Calu3 (cell line): ENCODE measurements at regions of chr7 and their contacts with region 1.

Region 1: GRCh38 chr7:131219312-131220041 is 108.2 kb upstream of the MKLN1 start:
- DNase-seq: no peak
- H3K4me3 Mint-ChIP-seq: no peak overlapping the region
- H3K27ac Mint-ChIP-seq: no peak overlapping the region
- H3K4me1 Mint-ChIP-seq: peaks cover 8% of the 10 kb centered on the region
- H3K27me3 Mint-ChIP-seq: no peaks in the 10 kb centered on the region
- CTCF ChIP-seq: no peak

Region 2: GRCh38 chr7:130758429-130759056 is 460.9 kb before region 1 on chr7:
- CTCF ChIA-PET with region 1: interaction called, 11 read pairs
- intact Hi-C with region 1: no loop called
- DNase-seq: no peak
- H3K4me3 Mint-ChIP-seq: no peak overlapping the region
- H3K27ac Mint-ChIP-seq: no peak overlapping the region
- H3K4me1 Mint-ChIP-seq: no peaks in the 10 kb centered on the region
- H3K27me3 Mint-ChIP-seq: peaks cover 60% of the 10 kb centered on the region
- CTCF ChIP-seq: peak; percentile 17

Region 3: DNA sequence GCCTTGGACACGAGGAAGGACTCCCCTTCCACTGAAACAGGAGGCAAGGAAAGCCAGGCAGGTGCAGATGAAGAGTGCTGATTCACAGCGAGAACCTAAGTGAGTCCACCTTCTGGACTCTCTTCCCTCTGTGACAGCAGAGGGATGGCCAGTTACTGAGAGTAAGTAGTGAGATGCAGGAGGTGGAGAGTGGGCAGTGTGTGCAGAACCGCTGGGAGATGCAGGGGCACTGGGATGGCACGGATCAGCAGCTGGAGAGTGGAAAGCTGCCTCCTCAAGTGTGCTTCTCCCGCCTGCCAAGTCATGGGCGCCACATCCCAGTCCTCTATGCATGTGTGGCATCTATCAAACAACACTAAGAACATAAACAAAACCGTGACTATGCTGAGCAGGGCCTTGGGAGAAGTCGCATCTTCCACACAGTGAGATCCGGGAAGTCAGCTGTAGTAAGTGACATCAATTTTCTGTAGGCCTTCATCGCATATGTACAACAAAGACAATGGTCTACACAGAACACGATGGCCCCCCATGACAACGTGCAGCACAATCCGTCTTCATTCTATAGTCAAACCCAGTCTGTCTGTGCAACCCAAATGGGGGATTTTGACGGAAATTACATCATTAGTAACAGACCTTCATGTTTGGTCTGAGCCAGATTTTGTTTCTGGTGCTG is 268.0 kb before region 1 on chr7:
- CTCF ChIA-PET with region 1: no interaction called
- intact Hi-C with region 1: no loop called
- DNase-seq: no peak
- H3K4me3 Mint-ChIP-seq: no peak overlapping the region
- H3K27ac Mint-ChIP-seq: no peak overlapping the region
- H3K4me1 Mint-ChIP-seq: peaks cover 13% of the 10 kb centered on the region
- H3K27me3 Mint-ChIP-seq: no peaks in the 10 kb centered on the region
- CTCF ChIP-seq: no peak

Region 4: DNA sequence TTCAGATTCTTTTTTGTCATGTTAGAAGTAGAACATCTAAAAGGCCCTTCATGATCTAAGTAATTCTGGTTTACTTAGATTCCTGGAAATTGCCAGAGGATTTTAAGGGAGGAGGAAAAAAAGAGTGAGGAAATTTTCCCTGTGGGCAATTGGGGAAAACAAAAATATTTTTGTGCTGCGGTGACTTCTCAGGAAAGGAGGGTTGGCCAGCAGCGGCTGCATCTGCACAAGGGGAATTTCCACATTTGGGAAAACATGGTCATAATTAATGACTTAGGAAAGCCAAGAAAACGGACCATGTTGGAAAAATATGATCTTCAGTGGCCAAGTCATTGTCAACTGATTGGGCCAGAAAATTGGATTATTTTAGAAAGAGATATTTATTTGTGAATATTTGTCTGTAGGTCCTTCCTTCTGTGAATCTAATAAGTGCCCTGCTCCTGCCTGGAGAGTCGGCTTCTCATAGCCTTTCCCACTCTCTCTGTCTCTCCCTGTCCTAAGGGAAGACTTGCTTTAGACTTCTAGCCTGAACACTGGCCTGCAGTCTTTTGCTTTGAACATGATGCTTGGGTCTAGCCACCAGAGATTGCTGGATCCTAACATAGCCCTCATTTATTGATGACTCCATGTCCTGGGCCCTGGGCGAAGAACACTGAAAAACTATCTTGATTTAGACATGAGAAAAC is 16.0 kb before region 1 on chr7:
- CTCF ChIA-PET with region 1: interaction called, 12 read pairs
- intact Hi-C with region 1: no loop called
- DNase-seq: no peak
- H3K4me3 Mint-ChIP-seq: no peak overlapping the region
- H3K27ac Mint-ChIP-seq: no peak overlapping the region
- H3K4me1 Mint-ChIP-seq: no peaks in the 10 kb centered on the region
- H3K27me3 Mint-ChIP-seq: no peaks in the 10 kb centered on the region
- CTCF ChIP-seq: no peak